Naive thymus-derived CD4-positive, alpha-beta T cell (primary cell): ENCODE measurements at regions of chr1 and their contacts with region 1.

Region 1: DNA sequence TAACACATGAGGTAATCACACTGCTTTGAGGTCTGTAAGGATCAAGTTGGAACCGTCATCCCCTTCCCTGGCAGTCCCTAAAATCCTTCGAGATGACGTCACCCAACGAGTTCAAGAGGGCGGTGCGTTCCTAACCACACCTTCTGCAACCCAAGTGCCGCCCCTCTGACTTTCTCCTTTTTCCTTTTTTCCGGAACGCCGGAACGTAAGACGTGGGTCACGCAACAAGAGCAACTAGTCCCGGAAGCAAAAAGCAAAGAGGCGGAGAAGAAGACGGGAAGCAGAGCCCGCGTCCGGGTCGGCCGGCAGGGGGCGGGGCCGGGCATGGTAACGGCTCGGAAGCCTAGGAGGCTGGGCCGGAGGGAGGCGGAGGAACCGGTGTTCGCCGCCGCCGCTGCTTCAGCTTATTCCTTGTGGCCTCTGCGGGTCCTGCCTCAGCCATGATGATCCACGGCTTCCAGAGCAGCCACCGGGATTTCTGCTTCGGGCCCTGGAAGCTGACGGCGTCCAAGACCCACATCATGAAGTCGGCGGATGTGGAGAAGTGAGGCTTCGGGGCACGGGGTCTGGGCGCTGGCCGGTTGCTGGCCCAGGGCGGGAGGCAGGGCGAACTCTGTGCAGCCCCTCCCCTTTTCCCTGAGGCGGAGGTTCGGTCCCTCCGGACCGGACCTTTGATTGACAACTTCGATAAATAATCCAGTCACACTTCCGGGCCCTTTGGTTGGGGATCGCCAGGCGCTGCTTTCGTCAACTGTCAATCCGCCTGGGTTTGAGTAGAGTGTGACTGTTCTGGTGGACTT is at the start of gene TIPRL:
- DNase-seq: peak; percentile 88 to 94 (median 93)
- ATAC-seq: peak; percentile 95
- H3K4me3 ChIP-seq: peak within 1 kb of the TSS; percentile 80
- H3K4me3 Mint-ChIP-seq: no peak within 1 kb of the TSS
- H3K27ac ChIP-seq: peak within 1 kb of the TSS; percentile 96
- H3K27ac Mint-ChIP-seq: no peak within 1 kb of the TSS
- H3K4me1 ChIP-seq: peaks cover 14 to 16% of the 10 kb centered on the region in 2 donors
- H3K4me1 Mint-ChIP-seq: peaks cover 3 to 20% (median 9%) of the 10 kb centered on the region in 7 donors
- H3K27me3 ChIP-seq: no peaks in the 10 kb centered on the region
- H3K27me3 Mint-ChIP-seq: peaks cover 2 to 9% (median 2%) of the 10 kb centered on the region in 5 donors
- total RNA-seq, gene TIPRL: 17.2 to 41.2 (median 23.5) TPM

Region 2: DNA sequence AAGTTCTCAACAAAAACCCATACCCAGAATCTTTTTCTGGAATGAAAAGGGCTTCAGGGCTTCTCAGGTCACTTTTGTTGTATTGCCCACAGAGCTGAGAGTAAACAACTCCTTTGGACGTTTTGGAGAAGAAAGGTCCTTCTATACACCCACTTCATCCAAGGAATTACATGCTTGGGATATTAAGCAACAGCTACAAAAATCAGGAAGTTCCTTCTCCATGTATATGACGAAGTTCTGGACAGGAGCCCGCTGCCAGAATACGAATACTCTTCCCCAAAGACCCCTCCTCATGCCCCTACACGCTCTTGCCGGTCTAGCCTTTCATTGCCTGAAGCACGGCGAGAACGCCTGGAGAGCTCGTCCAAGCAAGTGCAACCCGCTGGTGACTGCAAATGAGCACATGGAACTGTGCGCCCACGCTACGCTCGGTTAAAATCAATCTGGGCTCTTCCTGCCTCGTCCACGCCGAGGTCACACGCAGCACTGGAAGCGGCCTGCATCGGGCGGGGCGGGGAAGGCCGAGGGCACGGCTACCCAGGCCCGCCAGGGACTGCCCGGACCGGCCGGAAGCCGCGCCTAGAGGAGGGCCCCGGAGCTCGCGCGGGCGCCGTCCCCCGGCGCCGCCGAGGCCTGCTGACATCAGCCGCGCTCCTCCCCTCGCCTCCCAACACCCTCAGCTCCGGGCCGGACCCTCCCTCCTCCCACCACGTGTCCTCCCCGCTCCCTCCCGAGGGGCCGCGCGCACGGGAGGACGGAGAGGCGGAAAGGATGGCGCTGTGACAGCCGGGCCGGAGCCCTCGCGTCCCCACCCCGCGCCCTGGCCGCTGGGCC is 1339.9 kb before region 1 on chr1 and contains the start of gene POGK:
- CTCF ChIA-PET with region 1: no interaction called
- POLR2A ChIA-PET with region 1: no interaction called
- intact Hi-C with region 1: loop called in 1 of 2 experiments (anchors 1 kb)
- DNase-seq: peak; percentile 70 to 89 (median 77)
- ATAC-seq: peak; percentile 95
- H3K4me3 ChIP-seq: peak within 1 kb of the TSS; percentile 60
- H3K4me3 Mint-ChIP-seq: peak within 1 kb of the TSS; percentile 89 to 97 (median 92)
- H3K27ac ChIP-seq: peak within 1 kb of the TSS; percentile 90
- H3K27ac Mint-ChIP-seq: peak within 1 kb of the TSS; percentile 91 to 100 (median 94)
- H3K4me1 ChIP-seq: peaks cover 13 to 21% of the 10 kb centered on the region in 2 donors
- H3K4me1 Mint-ChIP-seq: peaks cover 23 to 55% (median 48%) of the 10 kb centered on the region in 7 donors
- H3K27me3 ChIP-seq: no peaks in the 10 kb centered on the region
- H3K27me3 Mint-ChIP-seq: no peaks in the 10 kb centered on the region
- total RNA-seq, gene POGK: 24.7 to 38.7 (median 36.9) TPM

Region 3: DNA sequence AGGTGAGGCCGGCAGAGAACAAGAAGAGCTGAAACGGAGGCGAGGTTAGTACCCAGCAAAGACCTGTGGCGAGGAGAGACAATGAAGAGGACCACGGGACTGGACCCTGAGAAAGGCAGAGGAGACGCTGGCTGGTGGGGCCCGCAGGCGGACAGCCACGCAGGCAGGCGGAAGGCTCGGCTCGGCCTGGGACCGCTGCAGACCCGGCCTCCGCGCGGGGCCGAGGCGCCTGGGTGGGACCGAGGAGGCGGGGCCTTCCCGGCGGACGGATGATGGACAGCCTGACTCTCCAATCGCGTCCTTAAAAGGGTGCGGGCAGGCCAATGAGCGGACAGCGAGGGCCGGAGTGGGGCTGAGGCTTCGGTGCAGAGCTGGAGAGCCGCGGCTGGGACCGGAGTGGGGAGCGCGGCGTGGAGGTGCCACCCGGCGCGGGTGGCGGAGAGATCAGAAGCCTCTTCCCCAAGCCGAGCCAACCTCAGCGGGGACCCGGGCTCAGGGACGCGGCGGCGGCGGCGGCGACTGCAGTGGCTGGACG is 457.2 kb before region 1 on chr1 and contains the start of gene MPZL1:
- CTCF ChIA-PET with region 1: no interaction called
- POLR2A ChIA-PET with region 1: no interaction called
- intact Hi-C with region 1: loop called in 1 of 2 experiments (anchors 5 kb)
- DNase-seq: peak; percentile 81 to 96 (median 88)
- ATAC-seq: peak; percentile 99
- H3K4me3 ChIP-seq: peak within 1 kb of the TSS; percentile 64
- H3K4me3 Mint-ChIP-seq: peak within 1 kb of the TSS; percentile 85 to 96 (median 91)
- H3K27ac ChIP-seq: peak within 1 kb of the TSS; percentile 70
- H3K27ac Mint-ChIP-seq: peak within 1 kb of the TSS; percentile 75 to 95 (median 86)
- H3K4me1 ChIP-seq: peaks cover 5 to 18% of the 10 kb centered on the region in 2 donors
- H3K4me1 Mint-ChIP-seq: peaks cover 35 to 76% (median 65%) of the 10 kb centered on the region in 7 donors
- H3K27me3 ChIP-seq: no peaks in the 10 kb centered on the region
- H3K27me3 Mint-ChIP-seq: peaks cover 0 to 5% (median 0%) of the 10 kb centered on the region in 5 donors
- total RNA-seq, gene MPZL1: 4.8 to 25.3 (median 8.6) TPM

Region 4: DNA sequence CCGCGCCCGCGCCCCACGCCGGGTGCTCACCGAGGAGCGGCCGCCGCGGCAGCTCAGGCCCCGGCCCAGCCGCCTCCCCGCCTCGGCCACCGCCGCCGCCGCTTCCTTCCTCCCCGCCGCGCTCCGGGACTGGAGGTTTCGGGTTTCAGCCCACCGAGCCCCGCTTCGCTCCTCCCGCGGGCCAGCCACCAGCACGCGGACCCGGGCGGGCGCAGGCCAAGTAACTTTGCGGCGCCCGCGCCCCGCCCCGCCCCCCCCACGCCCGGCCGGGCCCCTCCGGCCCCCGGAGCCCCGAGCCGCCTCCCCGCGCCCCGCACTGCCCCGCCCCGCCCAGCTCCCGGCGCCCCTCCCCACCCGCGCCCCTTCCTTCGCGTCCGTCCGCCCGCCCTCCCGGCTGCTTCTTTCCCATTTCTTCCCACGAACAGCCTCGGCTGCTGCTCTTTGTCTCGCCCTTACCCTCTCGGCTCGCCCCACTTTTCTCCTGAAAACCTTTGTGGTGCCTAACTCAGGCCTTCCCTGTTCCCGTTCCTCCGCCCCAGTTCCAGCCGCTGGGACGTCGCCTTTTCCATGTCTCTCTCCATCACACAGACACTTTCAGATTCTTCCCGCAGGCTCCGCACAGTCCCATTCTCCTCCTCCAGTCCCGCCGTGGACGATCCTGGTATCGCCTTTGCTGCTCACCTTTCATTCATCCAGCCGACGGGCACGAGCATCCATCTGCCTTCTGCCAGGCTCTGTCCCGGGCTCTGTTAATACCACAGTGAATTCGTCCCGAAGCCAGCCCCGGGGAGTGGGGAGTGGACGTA is 41.9 kb before region 1 on chr1 and contains the start of gene GPR161:
- CTCF ChIA-PET with region 1: no interaction called
- POLR2A ChIA-PET with region 1: no interaction called
- intact Hi-C with region 1: loop called (anchors 1 to 2 kb)
- DNase-seq: peak in 7 of 9 donors; percentile 4 to 48 (median 20)
- ATAC-seq: peak; percentile 56
- H3K4me3 ChIP-seq: peak within 1 kb of the TSS; percentile 63
- H3K4me3 Mint-ChIP-seq: peak within 1 kb of the TSS; percentile 86 to 98 (median 91)
- H3K27ac ChIP-seq: no peak within 1 kb of the TSS
- H3K27ac Mint-ChIP-seq: peak within 1 kb of the TSS in 8 of 9 donors; percentile 38 to 79 (median 71)
- H3K4me1 ChIP-seq: peaks cover 4 to 8% of the 10 kb centered on the region in 2 donors
- H3K4me1 Mint-ChIP-seq: peaks cover 12 to 23% (median 18%) of the 10 kb centered on the region in 7 donors
- H3K27me3 ChIP-seq: peaks cover 0 to 4% of the 10 kb centered on the region in 2 donors
- H3K27me3 Mint-ChIP-seq: peaks cover 37 to 70% (median 40%) of the 10 kb centered on the region in 5 donors
- total RNA-seq, gene GPR161: 0.05 to 0.60 (median 0.17) TPM in 4 of 5 experiments, not detected in the other

Region 5: GRCh38 chr1:168234846-168235547 is 56.2 kb after region 1 on chr1:
- CTCF ChIA-PET with region 1: interaction called, 4 read pairs
- POLR2A ChIA-PET with region 1: no interaction called
- intact Hi-C with region 1: loop called in 1 of 2 experiments (anchors 1 kb)
- DNase-seq: peak in 7 of 9 donors; percentile 17 to 38 (median 27)
- ATAC-seq: peak; percentile 95
- H3K4me3 ChIP-seq: no peak overlapping the region
- H3K4me3 Mint-ChIP-seq: peak overlapping the region in 1 of 10 donors; percentile 26
- H3K27ac ChIP-seq: no peak overlapping the region
- H3K27ac Mint-ChIP-seq: peak overlapping the region in 4 of 9 donors; percentile 1 to 68 (median 34)
- H3K4me1 ChIP-seq: peaks cover 9 to 11% of the 10 kb centered on the region in 2 donors
- H3K4me1 Mint-ChIP-seq: peaks cover 33 to 71% (median 61%) of the 10 kb centered on the region in 7 donors
- H3K27me3 ChIP-seq: no peaks in the 10 kb centered on the region
- H3K27me3 Mint-ChIP-seq: no peaks in the 10 kb centered on the region

Region 6: GRCh38 chr1:169485544-169486278 is 1306.9 kb after region 1 on chr1 and contains the start of gene SLC19A2:
- CTCF ChIA-PET with region 1: no interaction called
- POLR2A ChIA-PET with region 1: no interaction called
- intact Hi-C with region 1: loop called in 1 of 2 experiments (anchors 10 kb)
- DNase-seq: peak; percentile 79 to 94 (median 89)
- ATAC-seq: peak; percentile 99
- H3K4me3 ChIP-seq: peak within 1 kb of the TSS; percentile 66
- H3K4me3 Mint-ChIP-seq: peak within 1 kb of the TSS; percentile 87 to 98 (median 94)
- H3K27ac ChIP-seq: peak within 1 kb of the TSS; percentile 81
- H3K27ac Mint-ChIP-seq: peak within 1 kb of the TSS; percentile 86 to 98 (median 94)
- H3K4me1 ChIP-seq: peaks cover 4 to 12% of the 10 kb centered on the region in 2 donors
- H3K4me1 Mint-ChIP-seq: peaks cover 35 to 56% (median 46%) of the 10 kb centered on the region in 7 donors
- H3K27me3 ChIP-seq: no peaks in the 10 kb centered on the region
- H3K27me3 Mint-ChIP-seq: peaks cover 0 to 8% (median 0%) of the 10 kb centered on the region in 5 donors
- total RNA-seq, gene SLC19A2: 3.7 to 5.9 (median 4.8) TPM

Region 7: DNA sequence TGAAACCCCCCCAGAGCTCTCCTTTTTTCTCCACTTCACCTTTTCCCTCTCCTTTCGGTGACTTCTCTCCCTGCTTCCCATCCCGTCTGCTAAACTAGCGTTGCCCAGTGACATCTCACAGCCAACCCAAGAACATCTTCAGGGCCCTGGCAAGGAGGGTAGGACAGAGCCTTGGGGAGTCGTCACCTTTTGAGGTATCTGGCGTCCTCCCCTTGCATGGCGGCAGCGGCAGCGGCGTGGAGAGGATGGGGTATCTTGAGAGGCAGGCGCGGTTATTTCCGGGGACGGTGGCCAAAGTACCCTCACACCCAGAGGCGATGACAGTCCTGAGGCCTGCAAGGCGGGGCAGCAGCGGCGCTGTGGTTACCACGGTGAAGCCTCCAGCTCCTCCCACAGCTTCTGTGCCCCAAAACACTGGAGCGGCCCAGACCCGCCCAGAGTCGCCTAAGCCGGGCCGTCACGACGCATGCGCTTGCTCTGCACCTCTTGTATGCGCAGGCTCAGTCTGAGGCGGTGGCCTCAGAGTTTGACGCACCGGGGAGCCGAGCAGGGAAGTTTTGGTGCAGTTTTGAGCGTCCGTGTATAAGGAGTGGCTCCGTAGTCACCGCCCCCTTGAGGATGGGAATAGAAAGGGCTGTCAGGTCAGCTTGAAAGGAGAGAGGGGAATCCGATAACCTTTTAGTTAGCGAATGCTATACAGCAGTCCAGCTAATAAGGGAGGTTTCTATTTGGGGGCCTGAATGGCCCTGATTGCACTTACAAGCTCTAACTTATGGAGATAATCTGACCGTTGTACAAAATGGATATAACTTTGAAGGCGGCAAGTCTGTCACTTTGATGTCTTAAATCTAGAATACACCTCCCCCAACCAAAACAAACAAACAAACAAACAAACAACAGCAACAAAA is 1895.7 kb after region 1 on chr1 and contains the start of gene KIFAP3:
- CTCF ChIA-PET with region 1: no interaction called
- POLR2A ChIA-PET with region 1: no interaction called
- intact Hi-C with region 1: loop called in 1 of 2 experiments (anchors 2 kb)
- DNase-seq: peak; percentile 84 to 94 (median 92)
- ATAC-seq: peak; percentile 96
- H3K4me3 ChIP-seq: peak within 1 kb of the TSS; percentile 76
- H3K4me3 Mint-ChIP-seq: peak within 1 kb of the TSS; percentile 89 to 99 (median 96)
- H3K27ac ChIP-seq: peak within 1 kb of the TSS; percentile 90
- H3K27ac Mint-ChIP-seq: peak within 1 kb of the TSS; percentile 83 to 98 (median 94)
- H3K4me1 ChIP-seq: peaks cover 15 to 37% of the 10 kb centered on the region in 2 donors
- H3K4me1 Mint-ChIP-seq: peaks cover 34 to 65% (median 57%) of the 10 kb centered on the region in 7 donors
- H3K27me3 ChIP-seq: no peaks in the 10 kb centered on the region
- H3K27me3 Mint-ChIP-seq: peaks cover 0 to 3% (median 0%) of the 10 kb centered on the region in 5 donors
- total RNA-seq, gene KIFAP3: 12.8 to 23.8 (median 20.1) TPM